Ascending aorta (tissue), 2 donors: ENCODE measurements at regions of chr10 and their contacts with region 1.

Region 1: GRCh38 chr10:15097011-15097812 is at the start of gene RPP38:
- DNase-seq: peak; percentile 78 to 97
- H3K4me3 ChIP-seq: peak within 1 kb of the TSS; percentile 72 to 97
- H3K27ac ChIP-seq: peak within 1 kb of the TSS; percentile 85 to 97
- H3K4me1 ChIP-seq: peaks cover 6 to 22% of the 10 kb centered on the region in 2 donors
- H3K27me3 ChIP-seq: no peaks in the 10 kb centered on the region
- CTCF ChIP-seq: no peak
- total RNA-seq, gene RPP38: not detected

Region 2: GRCh38 chr10:14954001-14954770 is 143.0 kb before region 1 on chr10 and contains the start of gene DCLRE1C:
- intact Hi-C with region 1: loop called (anchors 1 kb)
- DNase-seq: peak; percentile 53 to 94
- H3K4me3 ChIP-seq: peak within 1 kb of the TSS; percentile 87 to 92
- H3K27ac ChIP-seq: peak within 1 kb of the TSS; percentile 89 to 91
- H3K4me1 ChIP-seq: peaks cover 4 to 11% of the 10 kb centered on the region in 2 donors
- H3K27me3 ChIP-seq: no peaks in the 10 kb centered on the region
- CTCF ChIP-seq: no peak
- total RNA-seq, gene DCLRE1C: 8.6 TPM

Region 3: GRCh38 chr10:14959276-14960057 is 137.7 kb before region 1 on chr10 and contains the start of gene MEIG1:
- intact Hi-C with region 1: loop called (anchors 1 kb)
- DNase-seq: peak; percentile 76 to 97
- H3K4me3 ChIP-seq: peak within 1 kb of the TSS; percentile 76 to 92
- H3K27ac ChIP-seq: peak within 1 kb of the TSS; percentile 92 to 97
- H3K4me1 ChIP-seq: peaks cover 0 to 3% of the 10 kb centered on the region in 2 donors
- H3K27me3 ChIP-seq: no peaks in the 10 kb centered on the region
- CTCF ChIP-seq: no peak
- total RNA-seq, gene MEIG1: not detected

Region 4: GRCh38 chr10:15189133-15189885 is 92.1 kb after region 1 on chr10:
- intact Hi-C with region 1: no loop called
- DNase-seq: no peak
- H3K4me3 ChIP-seq: no peak overlapping the region
- H3K27ac ChIP-seq: no peak overlapping the region
- H3K4me1 ChIP-seq: no peaks in the 10 kb centered on the region
- H3K27me3 ChIP-seq: no peaks in the 10 kb centered on the region
- CTCF ChIP-seq: no peak